Activated T-helper 2 cell treated with anti-CD3 and anti-CD28 coated beads, Interferon-gamma antibody, Interleukin-2, Interleukin-4, amounts not matched to agents 10 μg/mL and 5 μg/mL and 100 μg/mL, durations not matched to agents 14 hours and 24 hours and 36 hours (primary cell): ENCODE measurements at regions of chr5 and their contacts with region 1.

Region 1: GRCh38 chr5:55364537-55365055 is 56.8 kb downstream of the MTREX start:
- DNase-seq: no peak
- H3K4me3 Mint-ChIP-seq: no peak overlapping the region
- H3K27ac Mint-ChIP-seq: peak overlapping the region; percentile 49
- H3K4me1 Mint-ChIP-seq: peaks cover 15% of the 10 kb centered on the region
- H3K27me3 Mint-ChIP-seq: no peaks in the 10 kb centered on the region

Region 2: GRCh38 chr5:55480781-55481180 is 116.2 kb after region 1 on chr5:
- intact Hi-C with region 1: loop called (anchors 1 kb)
- DNase-seq: no peak
- H3K4me3 Mint-ChIP-seq: no peak overlapping the region
- H3K27ac Mint-ChIP-seq: no peak overlapping the region
- H3K4me1 Mint-ChIP-seq: peaks cover 32% of the 10 kb centered on the region
- H3K27me3 Mint-ChIP-seq: no peaks in the 10 kb centered on the region